ENCODE measurements at regions of chr17 and their contacts with region 1.

Region 1: DNA sequence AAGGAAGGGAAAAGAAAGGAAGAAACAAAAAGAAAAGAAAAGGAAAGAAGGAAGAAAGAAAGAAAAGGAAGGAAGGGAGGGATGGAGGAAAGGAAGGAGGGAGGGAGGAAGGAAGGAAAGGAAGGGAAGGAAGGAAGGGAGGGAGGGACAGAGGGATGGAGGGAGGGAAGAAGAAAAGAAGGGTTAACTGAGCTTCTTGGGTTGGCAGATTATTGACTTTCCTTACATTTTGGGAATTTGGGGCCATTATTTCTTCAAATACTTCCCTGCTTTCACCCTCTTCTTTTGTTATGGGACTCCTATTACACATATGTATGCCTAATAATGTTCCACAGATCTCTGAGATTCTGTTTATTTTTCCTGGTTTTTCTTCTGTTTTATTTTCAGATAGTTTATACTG is 285.6 kb downstream of the KCNJ2 start:
- DNase-seq: no peak
- H3K4me3 ChIP-seq: no peak overlapping the region
- H3K27ac ChIP-seq: no peak overlapping the region
- H3K4me1 ChIP-seq: no peaks in the 10 kb centered on the region
- H3K27me3 ChIP-seq: no peaks in the 10 kb centered on the region
- CTCF ChIP-seq: no peak
- EP300 ChIP-seq: no peak
- RAD21 ChIP-seq: no peak

Region 2: DNA sequence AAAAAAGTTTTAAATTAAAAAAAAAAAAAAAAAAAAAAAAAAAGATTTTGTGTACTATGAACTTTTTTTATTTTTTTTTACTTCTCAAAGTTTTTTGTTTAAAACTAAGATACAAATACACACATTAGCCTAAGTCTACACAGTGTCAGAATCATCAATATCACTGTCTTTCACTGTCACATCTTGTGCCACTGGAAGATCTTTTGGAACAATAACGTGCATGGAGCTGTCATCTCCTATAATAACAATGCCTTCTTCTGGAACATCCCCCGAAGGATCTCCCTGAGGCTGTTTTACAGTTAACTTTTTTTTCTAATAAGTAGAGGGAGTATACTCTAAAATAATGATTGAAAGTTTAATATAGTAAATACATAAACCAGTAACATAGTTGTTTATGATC is 10.1 kb after region 1 on chr17:
- CTCF ChIA-PET with region 1: interaction called, 11 read pairs
- POLR2A ChIA-PET with region 1: no interaction called
- DNase-seq: no peak
- H3K4me3 ChIP-seq: no peak overlapping the region
- H3K27ac ChIP-seq: no peak overlapping the region
- H3K4me1 ChIP-seq: no peaks in the 10 kb centered on the region
- H3K27me3 ChIP-seq: no peaks in the 10 kb centered on the region
- CTCF ChIP-seq: no peak
- EP300 ChIP-seq: no peak
- RAD21 ChIP-seq: no peak